A549 (cell line): ENCODE measurements at regions of chr6 and their contacts with region 1.

Region 1: GRCh38 chr6:37791156-37791919 is 28.2 kb upstream of the ZFAND3 start:
- DNase-seq: peak; percentile 90 to 91
- ATAC-seq: peak; percentile 98 to 99
- H3K4me3 ChIP-seq: no peak overlapping the region
- H3K27ac ChIP-seq: peak overlapping the region; percentile 4 to 63; a peak in 2 of 6 replicates
- H3K4me1 ChIP-seq: peaks cover 16% of the 10 kb centered on the region
- CTCF ChIP-seq: peak; percentile 64
- EP300 ChIP-seq: no peak
- POLR2A ChIP-seq: no peak
- RAD21 ChIP-seq: peak; percentile 79 to 85

Region 2: DNA sequence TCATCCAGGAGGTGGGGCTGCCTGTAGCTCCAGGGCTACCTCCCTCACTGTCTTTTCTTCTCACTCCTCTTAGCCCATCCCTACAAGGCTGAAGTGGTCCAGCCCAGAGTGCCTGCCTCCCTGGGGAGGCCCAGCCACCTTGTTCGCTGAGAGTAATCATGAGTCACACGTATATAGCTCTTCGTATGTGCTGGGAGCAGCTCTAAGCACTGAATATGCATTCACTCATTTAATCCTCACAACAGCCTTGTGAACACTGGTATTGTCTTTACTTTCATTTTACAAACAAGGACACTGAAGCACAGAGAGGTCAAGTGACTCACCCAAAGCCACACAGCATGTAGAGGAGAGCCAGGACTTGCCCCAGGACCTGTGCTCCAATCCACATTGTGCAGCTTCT is 277.0 kb before region 1 on chr6:
- CTCF ChIA-PET with region 1: no interaction called
- POLR2A ChIA-PET with region 1: no interaction called
- DNase-seq: no peak
- ATAC-seq: peak in 1 of 2 experiments; percentile 16; a peak in 1 of 6 replicates
- H3K4me3 ChIP-seq: no peak overlapping the region
- H3K27ac ChIP-seq: peak overlapping the region in 1 of 2 experiments; percentile 5; a peak in 1 of 6 replicates
- H3K4me1 ChIP-seq: peaks cover 11% of the 10 kb centered on the region; the same call in 1 of the 3 replicates
- CTCF ChIP-seq: no peak
- EP300 ChIP-seq: no peak
- POLR2A ChIP-seq: no peak
- RAD21 ChIP-seq: no peak

Region 3: GRCh38 chr6:37819177-37819823 is 28.0 kb after region 1 on chr6 and contains the start of gene ZFAND3:
- CTCF ChIA-PET with region 1: interaction called, 13 read pairs
- POLR2A ChIA-PET with region 1: interaction called, 6 read pairs
- DNase-seq: peak; percentile 82 to 96
- ATAC-seq: peak; percentile 90 to 95
- H3K4me3 ChIP-seq: peak within 1 kb of the TSS; percentile 62
- H3K27ac ChIP-seq: peak within 1 kb of the TSS; percentile 98 to 100
- H3K4me1 ChIP-seq: peaks cover 35% of the 10 kb centered on the region
- CTCF ChIP-seq: no peak
- EP300 ChIP-seq: no peak
- POLR2A ChIP-seq: no peak; the same call in none of the 2 replicates
- RAD21 ChIP-seq: no peak
- polyA plus RNA-seq, gene ZFAND3: 12.0 and 21.4 TPM in 2 replicates